GM12878 (cell line): ENCODE measurements at regions of chr5 and their contacts with region 1.

Region 1: DNA sequence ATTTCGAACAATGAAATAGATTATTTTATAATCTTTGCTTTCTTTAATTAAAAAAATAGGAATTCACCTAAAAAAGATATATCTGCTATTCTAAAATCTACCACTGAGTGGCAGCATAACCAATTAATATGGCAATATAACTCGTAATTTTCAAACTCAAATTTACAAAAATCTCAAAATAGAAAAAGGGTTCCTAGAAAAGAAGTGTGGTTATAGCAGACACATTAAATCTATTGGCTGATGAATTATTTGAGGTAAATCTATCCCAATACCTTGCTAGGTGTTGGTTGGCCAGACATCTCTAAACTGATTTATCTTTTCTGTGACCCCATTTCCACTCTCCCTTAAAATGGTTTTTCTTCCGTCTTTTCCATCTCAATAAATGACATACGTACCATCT is 30.2 kb upstream of the NRG2 start:
- DNase-seq: no peak
- ATAC-seq: no peak
- H3K4me3 ChIP-seq: no peak overlapping the region
- H3K27ac ChIP-seq: no peak overlapping the region
- H3K4me1 ChIP-seq: no peaks in the 10 kb centered on the region
- H3K27me3 ChIP-seq: peaks cover 0 to 3% of the 10 kb centered on the region in 2 experiments; a peak in 1 of 4 replicates
- CTCF ChIP-seq: peak in 2 of 3 experiments; percentile 28 to 34; a peak in 2 of 6 replicates
- EP300 ChIP-seq: no peak
- POLR2A ChIP-seq: no peak
- RAD21 ChIP-seq: peak; percentile 51

Region 2: GRCh38 chr5:139856714-139857113 is 216.6 kb before region 1 on chr5:
- CTCF ChIA-PET with region 1: no interaction called
- POLR2A ChIA-PET with region 1: no interaction called
- RAD21 ChIA-PET with region 1: no interaction called
- SMC1A ChIA-PET with region 1: no interaction called
- in situ Hi-C with region 1: no loop called
- intact Hi-C with region 1: no loop called
- DNase-seq: no peak
- ATAC-seq: no peak
- H3K4me3 ChIP-seq: no peak overlapping the region
- H3K27ac ChIP-seq: no peak overlapping the region
- H3K4me1 ChIP-seq: no peaks in the 10 kb centered on the region
- H3K27me3 ChIP-seq: no peaks in the 10 kb centered on the region
- CTCF ChIP-seq: no peak
- EP300 ChIP-seq: no peak
- POLR2A ChIP-seq: no peak
- RAD21 ChIP-seq: no peak

Region 3: GRCh38 chr5:140054086-140054689 is 19.1 kb before region 1 on chr5:
- CTCF ChIA-PET with region 1: interaction called, 32 read pairs
- POLR2A ChIA-PET with region 1: no interaction called
- RAD21 ChIA-PET with region 1: interaction called, 3 read pairs
- SMC1A ChIA-PET with region 1: interaction called, 18 read pairs
- in situ Hi-C with region 1: no loop called
- intact Hi-C with region 1: no loop called
- DNase-seq: no peak
- ATAC-seq: no peak
- H3K4me3 ChIP-seq: no peak overlapping the region
- H3K27ac ChIP-seq: no peak overlapping the region
- H3K4me1 ChIP-seq: peaks cover 7% of the 10 kb centered on the region
- H3K27me3 ChIP-seq: no peaks in the 10 kb centered on the region
- CTCF ChIP-seq: no peak
- EP300 ChIP-seq: no peak
- POLR2A ChIP-seq: no peak
- RAD21 ChIP-seq: no peak

Region 4: DNA sequence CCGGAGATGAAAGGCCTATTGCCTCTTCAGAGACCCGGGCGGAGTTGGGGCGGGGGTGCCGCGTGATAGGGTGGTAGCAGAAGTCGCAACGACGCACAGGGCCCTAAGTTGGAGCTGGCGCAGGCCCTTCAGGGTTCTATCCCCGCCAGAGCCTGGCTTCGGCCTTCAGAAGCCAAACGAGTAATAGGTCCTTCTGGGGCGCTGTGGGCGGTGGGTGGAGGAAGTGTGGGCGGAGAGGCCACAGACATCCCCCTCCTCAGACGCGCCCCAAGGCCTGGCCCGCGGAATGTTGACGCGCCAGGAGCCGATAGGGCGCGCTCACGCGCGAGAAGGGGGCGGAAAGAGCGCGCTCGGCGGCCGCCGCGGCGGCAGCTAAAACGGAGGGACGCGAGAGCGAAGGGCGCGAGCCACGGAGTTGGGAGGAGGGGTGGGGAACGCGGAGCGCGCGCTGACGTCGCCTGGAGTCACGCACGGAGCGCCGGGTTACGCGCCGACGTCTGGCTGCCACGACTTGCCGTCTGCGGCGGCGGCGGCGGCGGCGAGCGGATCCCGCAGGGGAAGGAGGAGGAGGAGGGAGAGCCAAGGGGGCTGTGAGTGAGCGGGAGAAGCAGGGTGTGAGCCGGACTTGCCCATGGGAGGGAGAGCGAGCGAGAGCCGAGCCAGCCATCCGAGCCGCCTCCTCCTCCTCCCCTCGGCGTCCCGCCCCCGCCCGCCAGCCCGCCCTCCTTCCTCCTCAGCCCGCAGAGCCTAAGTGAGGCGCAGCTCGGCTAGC is 34.2 kb after region 1 on chr5:
- CTCF ChIA-PET with region 1: interaction called, 21 read pairs
- POLR2A ChIA-PET with region 1: interaction called, 5 read pairs
- RAD21 ChIA-PET with region 1: interaction called, 11 read pairs
- SMC1A ChIA-PET with region 1: interaction called, 31 read pairs
- in situ Hi-C with region 1: no loop called
- intact Hi-C with region 1: no loop called
- DNase-seq: peak; percentile 68
- ATAC-seq: peak; percentile 89
- H3K4me3 ChIP-seq: peak overlapping the region; percentile 86
- H3K27ac ChIP-seq: peak overlapping the region; percentile 67
- H3K4me1 ChIP-seq: peaks cover 20% of the 10 kb centered on the region
- H3K27me3 ChIP-seq: no peaks in the 10 kb centered on the region
- CTCF ChIP-seq: peak; percentile 6 to 29 (median 27); a peak in 3 of 6 replicates
- EP300 ChIP-seq: no peak
- POLR2A ChIP-seq: peak; percentile 86
- RAD21 ChIP-seq: no peak

Region 5: DNA sequence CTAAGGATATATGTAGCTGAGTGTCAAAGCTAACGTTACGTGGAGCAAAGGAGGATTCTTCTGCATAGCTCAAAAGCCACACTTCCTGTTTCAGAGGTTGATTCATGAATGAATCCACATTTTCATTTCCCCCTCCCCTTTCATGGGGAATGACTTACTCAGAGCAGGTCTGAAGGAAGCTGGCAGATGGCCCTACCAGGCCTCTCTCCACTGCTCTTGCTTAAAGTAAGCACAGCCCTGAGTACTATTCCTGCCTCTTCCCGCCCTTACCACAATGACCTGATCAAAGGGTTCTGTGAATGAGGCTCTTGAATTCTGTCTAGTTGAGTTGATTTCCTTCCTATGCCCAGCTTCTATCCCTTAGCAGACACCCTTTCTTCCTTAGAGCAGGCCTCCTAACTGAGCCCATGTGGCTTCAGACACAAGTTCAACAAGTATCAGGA is 58.7 kb after region 1 on chr5:
- CTCF ChIA-PET with region 1: interaction called, 32 read pairs
- POLR2A ChIA-PET with region 1: no interaction called
- RAD21 ChIA-PET with region 1: interaction called, 15 read pairs
- SMC1A ChIA-PET with region 1: interaction called, 27 read pairs
- in situ Hi-C with region 1: no loop called
- intact Hi-C with region 1: no loop called
- DNase-seq: no peak
- ATAC-seq: peak; percentile 60
- H3K4me3 ChIP-seq: no peak overlapping the region
- H3K27ac ChIP-seq: no peak overlapping the region
- H3K4me1 ChIP-seq: peaks cover 8% of the 10 kb centered on the region; the same call in 1 of the 2 replicates
- H3K27me3 ChIP-seq: no peaks in the 10 kb centered on the region
- CTCF ChIP-seq: no peak
- EP300 ChIP-seq: no peak
- POLR2A ChIP-seq: no peak
- RAD21 ChIP-seq: no peak

Region 6: GRCh38 chr5:140157032-140157803 is 83.9 kb after region 1 on chr5:
- CTCF ChIA-PET with region 1: interaction called, 353 read pairs
- POLR2A ChIA-PET with region 1: no interaction called
- RAD21 ChIA-PET with region 1: interaction called, 60 read pairs
- SMC1A ChIA-PET with region 1: interaction called, 58 read pairs
- in situ Hi-C with region 1: no loop called
- intact Hi-C with region 1: loop called (anchors 1 kb)
- DNase-seq: peak; percentile 33
- ATAC-seq: peak; percentile 99
- H3K4me3 ChIP-seq: peak overlapping the region; percentile 41; the same call in 1 of the 2 replicates
- H3K27ac ChIP-seq: peak overlapping the region; percentile 24; the same call in 1 of the 2 replicates
- H3K4me1 ChIP-seq: peaks cover 4% of the 10 kb centered on the region
- H3K27me3 ChIP-seq: no peaks in the 10 kb centered on the region; a peak in 1 of 4 replicates
- CTCF ChIP-seq: peak; percentile 88 to 95 (median 94)
- EP300 ChIP-seq: no peak
- POLR2A ChIP-seq: no peak
- RAD21 ChIP-seq: peak; percentile 96

Region 7: DNA sequence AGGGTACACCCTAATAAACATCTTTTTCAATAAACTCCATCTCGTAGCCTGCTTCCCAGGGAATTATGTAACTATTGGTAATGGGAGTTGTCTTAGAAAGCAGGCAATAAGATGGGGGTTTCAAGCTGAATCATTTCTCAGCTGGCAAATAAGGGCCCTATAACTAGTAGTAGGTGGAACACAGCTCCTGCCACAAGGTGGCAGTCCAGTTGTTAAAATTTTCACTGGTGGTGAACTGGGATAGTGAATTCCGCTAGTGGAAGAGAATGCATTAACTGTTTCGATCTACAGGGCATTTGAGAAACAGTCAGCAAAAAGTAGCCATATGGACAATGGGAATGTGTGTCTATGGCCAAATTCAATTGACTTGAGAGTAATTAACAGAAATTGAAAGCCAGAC is 1199.6 kb after region 1 on chr5:
- CTCF ChIA-PET with region 1: no interaction called
- POLR2A ChIA-PET with region 1: no interaction called
- RAD21 ChIA-PET with region 1: no interaction called
- SMC1A ChIA-PET with region 1: no interaction called
- in situ Hi-C with region 1: no loop called
- intact Hi-C with region 1: no loop called
- DNase-seq: no peak
- ATAC-seq: no peak
- H3K4me3 ChIP-seq: no peak overlapping the region
- H3K27ac ChIP-seq: no peak overlapping the region
- H3K4me1 ChIP-seq: no peaks in the 10 kb centered on the region
- H3K27me3 ChIP-seq: no peaks in the 10 kb centered on the region
- CTCF ChIP-seq: no peak; a peak in 1 of 6 replicates
- EP300 ChIP-seq: no peak
- POLR2A ChIP-seq: no peak
- RAD21 ChIP-seq: no peak